WTC11 (cell line): ENCODE measurements at regions of chr11 and their contacts with region 1.

Region 1: DNA sequence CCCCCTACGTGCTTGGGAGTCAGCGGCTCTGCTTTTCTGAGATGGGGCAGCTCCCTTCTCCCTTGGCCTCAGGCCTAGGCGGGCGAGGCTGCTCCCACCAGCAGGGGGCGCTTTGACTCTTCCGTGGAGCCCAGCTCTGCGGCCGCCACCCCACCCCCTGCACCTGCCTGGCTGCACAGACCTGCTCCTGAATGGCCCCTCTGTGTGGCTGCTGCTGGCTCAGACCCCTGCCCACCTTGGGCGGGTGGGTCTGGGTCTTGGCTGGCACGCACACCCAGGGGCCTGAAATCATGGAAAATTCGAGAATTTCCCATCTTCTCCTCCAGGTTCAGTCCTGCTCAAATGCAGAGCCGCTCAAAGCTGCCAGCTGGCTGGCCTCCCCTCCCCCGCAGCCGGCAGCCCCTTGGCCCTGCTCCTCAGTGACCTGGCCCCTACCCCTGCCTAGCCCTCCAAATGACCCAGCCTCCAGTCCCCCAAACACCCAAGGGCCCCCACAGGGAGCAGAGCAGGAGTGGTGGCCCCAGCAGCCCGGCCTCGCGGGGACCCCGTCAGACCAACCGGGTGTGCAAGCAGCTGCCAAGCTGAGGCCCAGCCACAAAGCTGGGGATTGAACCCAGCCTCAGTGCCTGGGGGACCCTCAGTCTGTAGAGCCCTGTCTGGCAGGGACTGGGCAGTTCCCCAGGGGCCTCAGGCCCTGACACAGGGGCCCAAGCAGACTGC is 9.0 kb downstream of the PRR33 start:
- DNase-seq: peak; percentile 89
- ATAC-seq: peak; percentile 97
- H3K4me3 Mint-ChIP-seq: no peak overlapping the region
- H3K27ac Mint-ChIP-seq: no peak overlapping the region
- H3K4me1 Mint-ChIP-seq: no peaks in the 10 kb centered on the region
- H3K27me3 Mint-ChIP-seq: no peaks in the 10 kb centered on the region
- CTCF ChIP-seq: peak; percentile 95

Region 2: GRCh38 chr11:1642933-1643690 is 239.6 kb before region 1 on chr11:
- CTCF ChIA-PET with region 1: no interaction called
- POLR2A ChIA-PET with region 1: no interaction called
- DNase-seq: no peak
- ATAC-seq: no peak
- H3K4me3 Mint-ChIP-seq: no peak overlapping the region
- H3K27ac Mint-ChIP-seq: no peak overlapping the region
- H3K4me1 Mint-ChIP-seq: peaks cover 3% of the 10 kb centered on the region
- H3K27me3 Mint-ChIP-seq: peaks cover 3% of the 10 kb centered on the region
- CTCF ChIP-seq: no peak

Region 3: GRCh38 chr11:1694064-1694845 is 188.4 kb before region 1 on chr11:
- CTCF ChIA-PET with region 1: interaction called, 23 read pairs
- POLR2A ChIA-PET with region 1: no interaction called
- DNase-seq: peak; percentile 92
- ATAC-seq: peak; percentile 86
- H3K4me3 Mint-ChIP-seq: peak overlapping the region; percentile 35; the same call in 1 of the 2 replicates
- H3K27ac Mint-ChIP-seq: no peak overlapping the region
- H3K4me1 Mint-ChIP-seq: peaks cover 3% of the 10 kb centered on the region
- H3K27me3 Mint-ChIP-seq: peaks cover 22% of the 10 kb centered on the region
- CTCF ChIP-seq: peak; percentile 93

Region 4: GRCh38 chr11:1733716-1734640 is 148.7 kb before region 1 on chr11:
- CTCF ChIA-PET with region 1: no interaction called
- POLR2A ChIA-PET with region 1: no interaction called
- DNase-seq: no peak
- ATAC-seq: no peak
- H3K4me3 Mint-ChIP-seq: no peak overlapping the region
- H3K27ac Mint-ChIP-seq: no peak overlapping the region
- H3K4me1 Mint-ChIP-seq: no peaks in the 10 kb centered on the region
- H3K27me3 Mint-ChIP-seq: peaks cover 49% of the 10 kb centered on the region
- CTCF ChIP-seq: no peak

Region 5: GRCh38 chr11:1845561-1846452 is 36.9 kb before region 1 on chr11:
- CTCF ChIA-PET with region 1: interaction called, 19 read pairs
- POLR2A ChIA-PET with region 1: no interaction called
- DNase-seq: no peak
- ATAC-seq: no peak
- H3K4me3 Mint-ChIP-seq: no peak overlapping the region
- H3K27ac Mint-ChIP-seq: no peak overlapping the region
- H3K4me1 Mint-ChIP-seq: no peaks in the 10 kb centered on the region
- H3K27me3 Mint-ChIP-seq: peaks cover 2% of the 10 kb centered on the region; the same call in 1 of the 2 replicates
- CTCF ChIP-seq: no peak

Region 6: DNA sequence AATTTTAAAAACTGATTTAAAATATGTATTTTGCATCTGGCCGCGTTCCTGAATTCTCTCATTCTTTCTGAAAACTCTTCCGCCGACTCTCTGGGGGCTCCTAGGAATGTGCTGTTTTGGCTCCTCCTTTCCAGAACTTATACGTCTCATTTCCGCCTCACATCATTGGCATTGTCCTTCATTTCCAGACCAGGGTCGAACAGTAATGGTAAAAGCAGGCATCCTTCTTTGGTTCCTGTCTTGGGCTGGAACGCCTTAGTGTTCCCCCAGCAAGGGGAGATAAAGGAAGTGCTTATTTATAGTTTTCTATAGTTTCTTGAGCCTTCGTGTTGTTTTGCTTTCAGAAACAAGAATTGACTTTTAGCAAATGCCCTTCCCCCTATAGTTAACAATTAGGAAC is 25.9 kb after region 1 on chr11:
- CTCF ChIA-PET with region 1: interaction called, 23 read pairs
- POLR2A ChIA-PET with region 1: no interaction called
- DNase-seq: no peak
- ATAC-seq: no peak; the same call in 1 of the 2 replicates
- H3K4me3 Mint-ChIP-seq: no peak overlapping the region
- H3K27ac Mint-ChIP-seq: peak overlapping the region; percentile 21; the same call in 1 of the 2 replicates
- H3K4me1 Mint-ChIP-seq: peaks cover 18% of the 10 kb centered on the region
- H3K27me3 Mint-ChIP-seq: peaks cover 2% of the 10 kb centered on the region; the same call in 1 of the 2 replicates
- CTCF ChIP-seq: no peak

Region 7: GRCh38 chr11:1953489-1954266 is 71.0 kb after region 1 on chr11:
- CTCF ChIA-PET with region 1: interaction called, 62 read pairs
- POLR2A ChIA-PET with region 1: no interaction called
- DNase-seq: no peak
- ATAC-seq: 0 out of 2 replicates have a peak, but pooled peaks have one; percentile 24
- H3K4me3 Mint-ChIP-seq: no peak overlapping the region
- H3K27ac Mint-ChIP-seq: no peak overlapping the region
- H3K4me1 Mint-ChIP-seq: no peaks in the 10 kb centered on the region
- H3K27me3 Mint-ChIP-seq: no peaks in the 10 kb centered on the region
- CTCF ChIP-seq: no peak

Region 8: GRCh38 chr11:2002807-2003206 is 120.1 kb after region 1 on chr11:
- CTCF ChIA-PET with region 1: interaction called, 65 read pairs
- POLR2A ChIA-PET with region 1: interaction called, 3 read pairs
- DNase-seq: no peak
- ATAC-seq: no peak
- H3K4me3 Mint-ChIP-seq: no peak overlapping the region
- H3K27ac Mint-ChIP-seq: no peak overlapping the region
- H3K4me1 Mint-ChIP-seq: no peaks in the 10 kb centered on the region
- H3K27me3 Mint-ChIP-seq: no peaks in the 10 kb centered on the region
- CTCF ChIP-seq: no peak